Activated naive CD4-positive, alpha-beta T cell treated with anti-CD3 and anti-CD28 coated beads for 36 hours (primary cell): ENCODE measurements at regions of chr1 and their contacts with region 1.

Region 1: DNA sequence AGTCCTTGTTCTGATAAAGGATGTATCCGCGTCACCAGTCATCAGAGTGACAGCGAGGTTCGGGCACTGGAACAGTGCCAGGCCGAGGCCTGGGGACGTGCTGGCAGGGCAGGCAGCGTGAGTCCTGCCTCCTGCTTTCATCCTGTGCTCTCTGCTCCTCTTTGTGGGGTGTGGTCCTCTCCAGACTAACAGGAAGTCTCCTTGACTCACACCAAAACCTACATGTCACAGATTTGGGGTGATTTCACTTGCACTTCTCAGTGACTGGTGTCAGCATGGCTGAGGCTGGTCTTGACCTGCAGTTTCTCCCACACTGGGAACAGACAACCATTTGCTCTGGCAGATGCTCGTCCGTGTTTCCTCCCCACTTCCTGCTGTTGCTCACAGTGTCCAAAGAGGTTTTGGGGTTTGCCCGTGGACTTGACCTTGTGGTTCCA is 8.8 kb upstream of the NLRP3 start:
- DNase-seq: peak; percentile 73
- H3K4me3 Mint-ChIP-seq: no peak overlapping the region
- H3K27ac Mint-ChIP-seq: no peak overlapping the region
- H3K4me1 Mint-ChIP-seq: peaks cover 42% of the 10 kb centered on the region
- H3K27me3 Mint-ChIP-seq: peaks cover 3% of the 10 kb centered on the region

Region 2: DNA sequence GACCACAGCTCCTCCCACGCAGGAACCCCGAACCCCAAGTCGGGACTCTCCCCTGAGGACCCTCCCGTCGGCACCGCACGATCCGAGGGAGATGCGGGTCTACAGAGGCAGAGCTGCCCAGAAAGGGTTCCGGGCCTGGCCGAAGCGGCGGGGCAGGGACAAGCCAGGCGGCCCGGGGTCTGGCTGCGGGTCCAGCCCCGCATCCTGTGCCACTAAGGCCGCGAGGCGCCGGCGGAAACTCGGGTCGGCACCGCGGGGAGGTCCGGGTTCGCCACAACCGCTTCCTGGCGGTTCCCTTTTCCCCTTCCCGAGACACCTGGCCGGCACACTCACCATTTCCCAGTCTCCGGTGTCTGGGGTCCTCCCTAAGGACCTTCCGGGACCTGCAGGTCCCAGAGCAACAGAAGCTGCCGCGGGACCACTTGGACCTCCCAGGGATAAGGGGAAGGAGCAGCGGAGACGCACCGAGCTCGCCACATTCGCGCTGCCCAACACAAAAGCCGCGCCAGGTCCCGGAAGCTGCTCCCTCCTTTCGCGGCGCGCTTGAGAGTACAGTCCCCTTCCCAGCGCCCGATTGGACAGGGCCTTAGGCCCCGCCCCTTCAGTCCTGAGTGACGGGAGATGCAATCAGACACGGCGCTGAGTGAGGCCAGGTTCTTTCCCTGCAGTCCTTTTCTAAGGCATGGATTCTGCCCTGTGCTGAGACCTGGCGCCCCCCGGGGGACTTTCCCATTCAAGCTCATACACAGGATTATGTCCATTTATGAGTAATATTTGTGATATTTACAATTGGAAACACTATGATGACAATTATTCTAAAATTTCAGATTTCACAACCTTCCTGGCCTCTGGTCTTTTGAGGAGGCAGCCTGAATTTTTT is 328.7 kb before region 1 on chr1 and contains the start of gene ZNF670:
- CTCF ChIA-PET with region 1: no interaction called
- intact Hi-C with region 1: loop called (anchors 1 kb)
- DNase-seq: peak; percentile 98
- H3K4me3 Mint-ChIP-seq: peak within 1 kb of the TSS; percentile 91
- H3K27ac Mint-ChIP-seq: peak within 1 kb of the TSS; percentile 90
- H3K4me1 Mint-ChIP-seq: peaks cover 22% of the 10 kb centered on the region
- H3K27me3 Mint-ChIP-seq: peaks cover 6% of the 10 kb centered on the region
- total RNA-seq, gene ZNF670: 4.1 to 4.3 TPM

Region 3: DNA sequence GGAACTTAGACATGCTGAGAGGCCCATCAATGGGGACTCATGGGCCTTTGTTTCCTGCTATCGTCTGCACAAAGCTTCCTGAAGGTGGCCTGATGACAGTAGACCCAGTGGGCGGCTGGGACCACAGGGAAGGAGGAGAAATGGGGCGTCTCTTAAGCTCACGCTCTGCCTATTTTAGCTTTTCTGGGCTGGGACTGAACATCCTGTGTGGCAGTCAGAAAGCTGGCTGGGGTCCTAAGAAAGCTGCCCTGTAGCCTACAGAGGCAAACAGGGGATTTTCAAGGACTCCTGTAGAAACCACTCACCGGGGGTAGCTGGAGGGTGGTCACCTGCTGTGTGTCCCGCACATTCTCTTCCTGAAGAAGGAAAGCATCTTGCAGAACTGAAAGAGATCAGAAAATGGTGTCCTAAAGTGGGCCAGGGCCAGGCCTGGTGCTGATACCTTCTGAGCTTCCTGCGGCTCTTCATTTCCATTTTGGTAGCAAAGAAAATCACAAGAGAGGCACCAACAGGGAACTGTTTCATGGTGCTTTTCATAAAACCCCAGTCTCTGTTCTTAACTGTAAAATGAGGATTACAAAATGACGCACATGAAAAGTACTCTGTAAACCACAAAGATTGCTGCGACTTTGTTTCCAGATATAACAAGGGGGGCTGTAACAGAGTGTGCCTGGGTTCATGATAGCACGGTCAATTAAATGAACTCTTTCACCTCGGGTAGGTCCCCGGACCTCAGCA is 84.2 kb before region 1 on chr1:
- CTCF ChIA-PET with region 1: no interaction called
- intact Hi-C with region 1: loop called (anchors 2 kb)
- DNase-seq: peak; percentile 40
- H3K4me3 Mint-ChIP-seq: peak overlapping the region; percentile 25
- H3K27ac Mint-ChIP-seq: peak overlapping the region; percentile 77
- H3K4me1 Mint-ChIP-seq: peaks cover 28% of the 10 kb centered on the region
- H3K27me3 Mint-ChIP-seq: no peaks in the 10 kb centered on the region

Region 4: GRCh38 chr1:247390116-247390791 is 16.9 kb before region 1 on chr1:
- CTCF ChIA-PET with region 1: interaction called, 7 read pairs
- intact Hi-C with region 1: loop called (anchors 1 kb)
- DNase-seq: peak; percentile 91
- H3K4me3 Mint-ChIP-seq: no peak overlapping the region
- H3K27ac Mint-ChIP-seq: no peak overlapping the region
- H3K4me1 Mint-ChIP-seq: peaks cover 17% of the 10 kb centered on the region
- H3K27me3 Mint-ChIP-seq: peaks cover 7% of the 10 kb centered on the region

Region 5: DNA sequence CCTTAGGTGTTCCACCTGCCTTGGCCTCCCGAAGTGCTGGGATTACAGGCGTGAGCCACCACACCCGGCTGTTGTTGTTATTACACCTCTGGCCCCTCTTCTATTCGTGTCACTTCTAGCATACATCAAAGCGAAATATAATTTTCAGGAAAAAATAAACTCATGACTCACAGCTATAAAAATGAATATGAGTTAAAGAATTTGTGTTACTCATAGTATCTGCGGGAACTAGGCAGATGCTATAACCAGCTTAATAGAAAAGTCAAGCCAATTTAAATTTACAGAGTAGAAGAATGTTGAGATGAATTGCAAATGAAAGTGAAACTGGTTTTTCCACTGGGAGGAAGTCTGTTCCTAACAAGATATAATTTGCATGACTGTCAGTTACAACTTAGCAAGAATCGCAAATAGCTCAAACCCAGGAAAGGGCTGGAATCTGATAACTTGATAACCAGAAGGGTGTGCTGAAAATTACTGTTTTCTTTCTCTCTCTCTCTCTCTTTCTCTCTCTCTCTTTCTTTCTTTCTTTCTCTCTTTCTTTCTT is 499.4 kb after region 1 on chr1:
- CTCF ChIA-PET with region 1: no interaction called
- intact Hi-C with region 1: loop called (anchors 1 kb)
- DNase-seq: peak; percentile 60
- H3K4me3 Mint-ChIP-seq: peak overlapping the region; percentile 24
- H3K27ac Mint-ChIP-seq: peak overlapping the region; percentile 76
- H3K4me1 Mint-ChIP-seq: peaks cover 31% of the 10 kb centered on the region
- H3K27me3 Mint-ChIP-seq: peaks cover 3% of the 10 kb centered on the region

Region 6: GRCh38 chr1:248288391-248288790 is 881.2 kb after region 1 on chr1:
- CTCF ChIA-PET with region 1: no interaction called
- intact Hi-C with region 1: no loop called
- DNase-seq: no peak
- H3K4me3 Mint-ChIP-seq: no peak overlapping the region
- H3K27ac Mint-ChIP-seq: no peak overlapping the region
- H3K4me1 Mint-ChIP-seq: no peaks in the 10 kb centered on the region
- H3K27me3 Mint-ChIP-seq: peaks cover 9% of the 10 kb centered on the region